ENCODE measurements at regions of chr5 and their contacts with region 1.

Region 1: DNA sequence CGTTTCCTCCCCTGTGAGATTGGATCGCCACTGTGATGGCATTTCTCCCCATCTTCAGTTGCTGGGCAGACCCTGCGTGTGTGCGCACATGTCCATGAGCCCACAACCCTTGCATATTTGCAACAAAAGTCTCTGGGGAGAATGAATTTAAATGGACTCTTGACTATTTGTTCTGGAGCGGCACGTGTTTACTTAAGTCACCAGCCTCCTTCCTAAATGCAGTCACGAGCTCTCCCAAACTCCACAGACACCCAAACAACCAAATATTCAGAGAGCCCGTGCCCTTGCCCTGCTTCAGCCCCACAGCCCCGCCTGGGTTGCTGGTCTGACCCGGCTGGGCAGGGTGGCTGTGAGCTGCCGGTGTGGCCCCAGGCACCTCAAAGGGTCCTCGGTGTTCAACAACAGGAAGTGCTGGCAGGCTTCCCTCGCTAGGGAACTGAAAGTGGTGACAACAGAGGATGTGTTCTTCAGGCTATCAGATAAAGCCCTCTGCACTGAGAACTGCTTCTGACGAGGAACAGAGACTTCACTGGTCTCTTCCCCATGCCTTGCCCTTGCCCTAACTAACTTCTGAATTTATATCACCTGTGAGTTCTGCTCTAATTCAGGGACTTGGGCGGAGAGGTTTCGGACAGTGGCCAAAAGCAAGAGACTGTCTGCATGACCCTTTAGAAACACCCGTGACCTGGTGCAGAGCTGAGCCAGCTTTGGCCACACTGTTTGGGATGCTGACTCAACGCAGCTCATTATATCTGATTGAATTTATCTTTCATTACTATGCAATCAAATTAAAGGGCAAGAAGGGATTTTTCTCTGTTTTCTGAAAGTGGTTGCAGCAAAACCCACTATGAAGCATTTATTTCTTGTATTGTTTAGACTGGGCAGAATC is 19.2 kb upstream of the CD180 start:
- DNase-seq: peak; percentile 89 to 94 (median 90)
- H3K4me3 ChIP-seq: peak overlapping the region in 2 of 3 experiments; percentile 3 to 54
- H3K4me3 Mint-ChIP-seq: peak overlapping the region; percentile 56 to 88
- H3K27ac ChIP-seq: peak overlapping the region; percentile 75 to 95
- H3K27ac Mint-ChIP-seq: peak overlapping the region; percentile 92 to 97 (median 95)
- H3K4me1 ChIP-seq: peaks cover 21 to 24% of the 10 kb centered on the region in 2 donors
- H3K4me1 Mint-ChIP-seq: peaks cover 31% of the 10 kb centered on the region
- H3K27me3 ChIP-seq: no peaks in the 10 kb centered on the region
- H3K27me3 Mint-ChIP-seq: no peaks in the 10 kb centered on the region
- CTCF ChIP-seq: no peak

Region 2: DNA sequence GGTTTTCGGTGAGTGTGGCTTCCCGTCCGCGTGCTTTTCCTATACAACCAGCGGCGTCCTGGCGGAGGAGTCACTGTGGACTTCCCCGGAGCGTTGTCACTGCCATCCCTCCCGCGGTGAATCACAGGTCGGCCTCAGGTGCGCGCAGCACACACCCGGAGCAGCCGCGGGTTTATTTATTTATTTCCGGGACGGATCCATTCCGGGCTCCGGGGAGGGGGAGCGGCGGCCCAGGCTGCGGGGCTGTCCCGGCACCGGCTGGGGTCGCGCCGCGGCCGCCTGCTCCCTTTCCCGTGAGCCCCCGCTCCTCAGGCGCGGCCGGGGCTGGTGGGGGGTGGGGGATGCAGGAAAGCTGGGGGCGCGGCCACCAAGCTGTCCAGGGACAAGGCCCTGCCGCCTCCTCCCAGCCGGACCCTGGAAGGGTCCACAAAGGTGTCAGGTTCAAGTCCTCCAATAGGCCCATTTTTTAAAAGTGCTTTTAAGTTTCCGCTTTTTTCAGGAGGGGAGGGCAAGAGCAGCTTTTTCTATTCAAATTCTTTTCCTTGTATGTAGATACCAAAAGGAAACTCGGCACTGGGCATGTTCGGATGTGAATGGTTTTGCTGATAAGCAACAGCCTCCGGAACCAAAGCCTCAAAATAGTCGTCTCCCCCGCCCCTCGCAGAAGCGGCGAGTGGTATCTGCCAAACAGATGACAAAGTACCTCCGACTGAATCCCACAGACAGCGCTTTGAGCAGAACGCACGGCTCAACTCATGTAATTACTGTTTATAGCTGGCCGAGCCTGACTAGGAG is 211.7 kb before region 1 on chr5:
- intact Hi-C with region 1: loop called in 1 of 2 experiments (anchors 10 kb)
- DNase-seq: peak; percentile 39 to 87 (median 41)
- H3K4me3 ChIP-seq: peak overlapping the region; percentile 51 to 79 (median 67)
- H3K4me3 Mint-ChIP-seq: peak overlapping the region; percentile 86 to 96
- H3K27ac ChIP-seq: peak overlapping the region in 1 of 2 donors; percentile 38
- H3K27ac Mint-ChIP-seq: peak overlapping the region; percentile 1 to 71 (median 41)
- H3K4me1 ChIP-seq: peaks cover 12 to 19% of the 10 kb centered on the region in 2 donors
- H3K4me1 Mint-ChIP-seq: peaks cover 20% of the 10 kb centered on the region
- H3K27me3 ChIP-seq: peaks cover 5 to 7% of the 10 kb centered on the region in 2 donors
- H3K27me3 Mint-ChIP-seq: peaks cover 0 to 10% (median 5%) of the 10 kb centered on the region in 3 donors
- CTCF ChIP-seq: no peak

Measured in CD14-positive monocyte (primary cell).